Activated CD4-positive, alpha-beta T cell treated with anti-CD3 and anti-CD28 coated beads, Interleukin-2, amount 10 ng/mL, durations not matched to agents 24 days and 14 days (primary cell): ENCODE measurements at regions of chr9 and their contacts with region 1.

Region 1: DNA sequence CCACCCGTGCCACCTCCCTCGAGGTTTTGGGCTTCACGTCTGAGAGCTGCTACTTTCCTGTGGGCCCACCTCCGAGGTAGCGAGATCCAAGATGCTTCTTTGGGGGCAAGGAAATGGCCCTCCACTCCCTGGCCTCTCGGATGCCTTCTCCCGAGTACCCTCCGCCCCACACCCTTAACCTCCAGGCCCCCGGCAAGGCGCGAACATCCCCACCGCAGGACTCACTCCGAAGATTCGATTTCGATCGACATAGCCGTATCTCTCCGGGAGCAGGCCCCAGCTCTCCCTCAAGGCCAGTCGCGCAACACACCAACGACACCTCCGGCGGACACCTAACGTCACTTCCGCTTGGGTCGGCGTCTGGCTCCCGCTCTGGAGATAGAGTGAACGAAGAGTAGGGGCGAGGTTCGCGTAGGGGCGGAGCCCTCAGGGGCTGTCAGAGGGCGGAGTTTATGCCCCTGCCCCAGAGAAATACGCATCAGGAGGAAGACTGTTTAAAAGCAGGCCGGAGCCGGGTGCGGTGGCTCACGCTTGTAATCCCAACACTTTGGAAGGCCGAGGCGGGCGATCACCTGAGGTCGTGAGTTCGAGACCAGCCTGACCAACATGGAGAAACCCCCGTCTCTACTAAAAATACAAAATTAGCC is at the start of gene SMU1:
- DNase-seq: peak; percentile 99
- H3K4me3 Mint-ChIP-seq: peak within 1 kb of the TSS; percentile 98
- H3K27ac Mint-ChIP-seq: peak within 1 kb of the TSS; percentile 97
- H3K4me1 Mint-ChIP-seq: peaks cover 19% of the 10 kb centered on the region
- H3K27me3 Mint-ChIP-seq: no peaks in the 10 kb centered on the region
- total RNA-seq, gene SMU1: 28.6 and 30.2 TPM in 2 replicates

Region 2: DNA sequence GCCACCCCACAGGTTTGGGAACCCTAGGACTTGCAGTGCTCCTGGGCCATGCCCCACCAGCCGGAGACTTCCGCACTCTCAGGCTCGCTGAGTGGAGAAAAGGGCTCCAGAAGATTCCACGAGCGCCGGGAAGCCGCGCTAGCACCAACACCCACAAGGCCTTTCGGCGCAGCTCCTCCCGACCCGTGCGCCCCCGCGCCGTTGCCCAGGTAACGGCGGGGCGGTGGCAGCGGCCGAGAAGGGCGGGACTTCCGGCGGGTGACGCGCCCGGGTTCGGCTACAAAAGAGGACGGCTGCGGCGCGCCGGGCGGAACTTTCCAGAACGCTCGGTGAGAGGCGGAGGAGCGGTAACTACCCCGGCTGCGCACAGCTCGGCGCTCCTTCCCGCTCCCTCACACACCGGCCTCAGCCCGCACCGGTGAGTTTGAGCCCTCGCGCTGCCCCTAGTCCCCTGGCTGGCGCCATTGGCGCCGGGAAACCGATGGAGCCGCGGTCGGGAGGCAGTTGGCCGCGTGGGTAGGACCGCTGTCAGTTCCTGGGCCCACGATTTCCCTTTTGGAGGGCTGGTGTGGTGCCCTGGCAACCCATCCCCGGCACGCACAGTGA is 51.4 kb before region 1 on chr9 and contains the start of gene DNAJA1:
- intact Hi-C with region 1: loop called (anchors 1 kb)
- DNase-seq: peak; percentile 99
- H3K4me3 Mint-ChIP-seq: peak within 1 kb of the TSS; percentile 99
- H3K27ac Mint-ChIP-seq: peak within 1 kb of the TSS; percentile 97
- H3K4me1 Mint-ChIP-seq: peaks cover 57% of the 10 kb centered on the region
- H3K27me3 Mint-ChIP-seq: no peaks in the 10 kb centered on the region
- total RNA-seq, gene DNAJA1: 319 and 328 TPM in 2 replicates

Region 3: DNA sequence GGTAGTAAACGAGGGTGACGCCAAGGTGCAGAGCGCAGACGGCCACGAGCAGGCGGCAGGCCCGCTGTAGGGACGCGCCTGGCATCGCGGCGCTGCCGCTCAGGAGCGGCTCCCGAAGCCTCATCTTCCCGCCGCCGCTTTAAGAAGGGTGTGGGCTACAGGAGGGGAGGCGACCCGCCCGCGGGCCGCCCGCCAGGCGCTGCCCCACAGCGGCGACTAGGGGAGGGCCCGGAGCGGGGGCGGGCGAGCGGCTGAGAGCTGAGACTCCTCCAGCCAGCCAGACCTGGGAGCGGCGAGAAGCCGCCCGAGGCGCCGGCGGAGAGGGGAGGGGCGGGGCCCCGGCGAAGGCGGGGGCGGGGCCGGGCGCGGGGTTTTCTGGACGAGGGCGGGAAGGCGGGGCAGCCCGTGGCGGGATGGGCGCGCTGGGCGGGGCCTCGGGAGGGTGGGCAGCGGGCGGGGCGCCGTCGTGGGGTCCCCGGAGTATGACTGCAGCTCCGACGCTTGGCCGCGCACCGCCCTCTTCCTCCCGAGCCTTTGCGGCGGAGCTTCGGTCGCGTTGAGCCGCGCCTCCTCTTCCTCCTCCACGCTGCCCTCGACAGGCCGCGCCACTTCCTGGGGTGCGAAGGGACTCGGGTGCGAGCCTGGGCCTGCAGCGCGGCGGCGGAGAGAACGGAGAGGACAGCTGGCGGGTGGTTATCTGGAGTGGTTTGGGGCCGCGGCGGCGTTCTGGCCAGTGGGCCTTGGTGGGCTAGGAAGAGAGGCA is 90.7 kb after region 1 on chr9 and contains the start of gene B4GALT1:
- intact Hi-C with region 1: loop called (anchors 1 kb)
- DNase-seq: peak; percentile 97
- H3K4me3 Mint-ChIP-seq: peak within 1 kb of the TSS; percentile 95
- H3K27ac Mint-ChIP-seq: peak within 1 kb of the TSS; percentile 98
- H3K4me1 Mint-ChIP-seq: peaks cover 65% of the 10 kb centered on the region
- H3K27me3 Mint-ChIP-seq: no peaks in the 10 kb centered on the region
- total RNA-seq, gene B4GALT1: 53.8 and 55.7 TPM in 2 replicates

Region 4: GRCh38 chr9:33264473-33265177 is 188.1 kb after region 1 on chr9 and contains the starts of genes BAG1 and CHMP5:
- intact Hi-C with region 1: loop called (anchors 1 kb)
- DNase-seq: peak; percentile 100
- H3K4me3 Mint-ChIP-seq: peak within 1 kb of the TSS; percentile 97
- H3K27ac Mint-ChIP-seq: peak within 1 kb of the TSS; percentile 99
- H3K4me1 Mint-ChIP-seq: peaks cover 52% of the 10 kb centered on the region
- H3K27me3 Mint-ChIP-seq: no peaks in the 10 kb centered on the region
- total RNA-seq, gene BAG1: 72.4 and 73.6 TPM in 2 replicates
- total RNA-seq, gene CHMP5: 73.9 and 77.7 TPM in 2 replicates